Dorsolateral prefrontal cortex (tissue), 120 donors: ENCODE measurements at regions of chr1 and their contacts with region 1.

Region 1: GRCh38 chr1:210400043-210400840 is 71.5 kb downstream of the HHAT start:
- DNase-seq: peak; percentile 28 to 84 (median 62)
- H3K4me3 ChIP-seq: no peak overlapping the region
- H3K27ac ChIP-seq: peak overlapping the region in 1 of 59 donors; percentile 31
- H3K27me3 ChIP-seq: no peaks in the 10 kb centered on the region
- CTCF ChIP-seq: peak in 55 of 56 donors; percentile 44 to 98 (median 89)

Region 2: DNA sequence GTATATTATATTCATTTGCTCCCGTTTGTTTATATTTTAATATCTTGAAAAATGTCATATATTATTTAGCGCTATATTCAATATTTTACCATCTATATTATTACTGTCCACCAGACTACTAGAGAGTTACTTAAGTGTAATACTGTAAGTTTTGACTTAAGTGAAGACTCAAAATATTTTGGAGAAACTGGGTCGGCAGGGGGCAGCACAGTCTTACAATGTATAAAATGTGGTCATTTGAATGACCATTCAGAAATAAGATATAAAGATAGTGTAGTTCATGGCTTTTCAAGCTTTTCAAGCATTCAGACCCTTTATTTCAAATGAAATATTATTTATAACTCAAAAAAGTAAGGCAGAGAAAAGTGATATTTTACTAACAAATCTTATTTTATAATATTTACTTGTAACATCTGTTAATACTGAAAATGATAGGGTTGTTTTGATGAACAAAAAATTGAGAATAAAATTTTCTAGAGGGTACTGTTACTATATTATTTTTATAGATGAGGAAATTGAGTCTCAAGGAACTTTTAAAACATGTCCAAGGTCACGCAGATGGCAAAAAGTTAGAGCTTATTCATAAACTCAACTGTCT is 256.7 kb before region 1 on chr1:
- intact Hi-C with region 1: loop called in 1 of 2 experiments (anchors 10 kb)
- DNase-seq: peak; percentile 44 to 89 (median 61)
- H3K4me3 ChIP-seq: no peak overlapping the region
- H3K27ac ChIP-seq: no peak overlapping the region
- H3K27me3 ChIP-seq: no peaks in the 10 kb centered on the region
- CTCF ChIP-seq: peak; percentile 64 to 91 (median 78)

Region 3: GRCh38 chr1:210360852-210361477 is 39.3 kb before region 1 on chr1:
- intact Hi-C with region 1: loop called (anchors 1 to 2 kb)
- DNase-seq: peak in 1 of 10 donors; percentile 43
- H3K4me3 ChIP-seq: peak overlapping the region in 2 of 59 donors; percentile 8 to 33
- H3K27ac ChIP-seq: peak overlapping the region in 3 of 59 donors; percentile 10 to 27 (median 12)
- H3K27me3 ChIP-seq: no peaks in the 10 kb centered on the region
- CTCF ChIP-seq: peak; percentile 59 to 93 (median 79)